CD8-positive, alpha-beta T cell (primary cell): ENCODE measurements at regions of chr11 and their contacts with region 1.

Region 1: DNA sequence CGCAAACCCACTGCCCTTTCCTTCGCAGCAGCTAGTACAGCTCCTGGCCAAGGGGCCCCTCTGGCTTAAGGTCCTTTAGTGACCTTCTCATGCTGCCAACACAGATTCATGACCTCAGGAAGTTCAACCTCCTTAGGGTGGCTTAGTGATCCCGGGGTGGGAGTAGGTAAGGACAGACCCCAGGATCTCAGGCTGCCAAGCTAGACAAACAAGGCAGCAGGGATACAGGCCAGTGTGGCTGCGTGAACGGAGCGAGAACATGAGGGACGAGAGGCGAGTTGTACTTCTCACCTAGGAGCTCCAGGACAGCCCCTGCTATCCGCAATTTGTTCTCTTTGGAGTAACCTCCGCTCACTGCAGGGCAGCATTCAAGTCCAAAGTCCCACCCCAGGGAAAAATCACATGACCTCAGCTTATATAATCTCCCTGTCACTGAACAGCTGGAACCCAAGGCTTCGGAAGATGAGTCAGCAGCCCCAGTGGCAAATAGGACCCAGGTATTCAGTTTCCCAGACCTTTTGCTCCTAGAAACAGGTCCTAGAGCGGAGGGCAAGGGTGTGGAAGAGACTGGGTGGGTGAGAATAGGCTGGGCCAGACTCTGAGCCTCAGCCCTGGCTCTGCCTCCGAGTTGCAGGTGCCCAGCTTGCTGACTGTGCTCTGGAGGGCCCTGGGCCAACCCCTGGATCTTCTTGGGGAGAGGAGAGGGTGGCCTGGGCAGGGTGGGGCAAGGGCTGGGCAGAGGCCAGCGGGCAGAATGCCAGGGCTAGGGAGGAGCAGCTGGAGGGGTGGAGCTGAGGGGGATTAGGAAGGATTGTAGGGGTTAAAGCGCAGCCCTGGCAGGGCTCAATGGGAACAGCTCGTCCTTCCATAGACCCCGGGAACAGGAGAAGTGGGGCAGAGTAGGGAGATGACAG is 13.1 kb downstream of the USP2 start:
- DNase-seq: no peak
- ATAC-seq: no peak
- H3K4me3 ChIP-seq: no peak overlapping the region
- H3K4me3 Mint-ChIP-seq: no peak overlapping the region
- H3K27ac ChIP-seq: no peak overlapping the region
- H3K27ac Mint-ChIP-seq: no peak overlapping the region
- H3K4me1 ChIP-seq: peaks cover 10% of the 10 kb centered on the region
- H3K4me1 Mint-ChIP-seq: peaks cover 13% of the 10 kb centered on the region
- H3K27me3 ChIP-seq: peaks cover 10 to 21% of the 10 kb centered on the region in 2 experiments
- H3K27me3 Mint-ChIP-seq: peaks cover 52% of the 10 kb centered on the region
- CTCF ChIP-seq: no peak

Region 2: GRCh38 chr11:119282495-119282894 is 85.9 kb before region 1 on chr11:
- CTCF ChIA-PET with region 1: no interaction called
- POLR2A ChIA-PET with region 1: no interaction called
- intact Hi-C with region 1: no loop called
- DNase-seq: peak in 1 of 9 experiments; percentile 35
- ATAC-seq: no peak
- H3K4me3 ChIP-seq: no peak overlapping the region
- H3K4me3 Mint-ChIP-seq: no peak overlapping the region
- H3K27ac ChIP-seq: no peak overlapping the region
- H3K27ac Mint-ChIP-seq: peak overlapping the region; percentile 50
- H3K4me1 ChIP-seq: peaks cover 18% of the 10 kb centered on the region
- H3K4me1 Mint-ChIP-seq: peaks cover 34% of the 10 kb centered on the region
- H3K27me3 ChIP-seq: no peaks in the 10 kb centered on the region
- H3K27me3 Mint-ChIP-seq: no peaks in the 10 kb centered on the region
- CTCF ChIP-seq: no peak

Region 3: GRCh38 chr11:119381181-119381988 is 13.0 kb after region 1 on chr11 and contains the start of gene USP2:
- CTCF ChIA-PET with region 1: interaction called, 21 read pairs
- POLR2A ChIA-PET with region 1: interaction called, 5 read pairs
- intact Hi-C with region 1: no loop called
- DNase-seq: peak; percentile 94 to 98 (median 97)
- ATAC-seq: peak; percentile 98
- H3K4me3 ChIP-seq: peak within 1 kb of the TSS; percentile 74 to 80
- H3K4me3 Mint-ChIP-seq: no peak within 1 kb of the TSS
- H3K27ac ChIP-seq: peak within 1 kb of the TSS; percentile 57 to 73
- H3K27ac Mint-ChIP-seq: peak within 1 kb of the TSS; percentile 21
- H3K4me1 ChIP-seq: peaks cover 16% of the 10 kb centered on the region
- H3K4me1 Mint-ChIP-seq: peaks cover 7% of the 10 kb centered on the region
- H3K27me3 ChIP-seq: peaks cover 0 to 14% of the 10 kb centered on the region in 2 experiments
- H3K27me3 Mint-ChIP-seq: no peaks in the 10 kb centered on the region
- CTCF ChIP-seq: peak; percentile 92
- total RNA-seq, gene USP2: 3.4 to 5.9 TPM